ENCODE measurements at regions of chr9 and their contacts with region 1.

Region 1: DNA sequence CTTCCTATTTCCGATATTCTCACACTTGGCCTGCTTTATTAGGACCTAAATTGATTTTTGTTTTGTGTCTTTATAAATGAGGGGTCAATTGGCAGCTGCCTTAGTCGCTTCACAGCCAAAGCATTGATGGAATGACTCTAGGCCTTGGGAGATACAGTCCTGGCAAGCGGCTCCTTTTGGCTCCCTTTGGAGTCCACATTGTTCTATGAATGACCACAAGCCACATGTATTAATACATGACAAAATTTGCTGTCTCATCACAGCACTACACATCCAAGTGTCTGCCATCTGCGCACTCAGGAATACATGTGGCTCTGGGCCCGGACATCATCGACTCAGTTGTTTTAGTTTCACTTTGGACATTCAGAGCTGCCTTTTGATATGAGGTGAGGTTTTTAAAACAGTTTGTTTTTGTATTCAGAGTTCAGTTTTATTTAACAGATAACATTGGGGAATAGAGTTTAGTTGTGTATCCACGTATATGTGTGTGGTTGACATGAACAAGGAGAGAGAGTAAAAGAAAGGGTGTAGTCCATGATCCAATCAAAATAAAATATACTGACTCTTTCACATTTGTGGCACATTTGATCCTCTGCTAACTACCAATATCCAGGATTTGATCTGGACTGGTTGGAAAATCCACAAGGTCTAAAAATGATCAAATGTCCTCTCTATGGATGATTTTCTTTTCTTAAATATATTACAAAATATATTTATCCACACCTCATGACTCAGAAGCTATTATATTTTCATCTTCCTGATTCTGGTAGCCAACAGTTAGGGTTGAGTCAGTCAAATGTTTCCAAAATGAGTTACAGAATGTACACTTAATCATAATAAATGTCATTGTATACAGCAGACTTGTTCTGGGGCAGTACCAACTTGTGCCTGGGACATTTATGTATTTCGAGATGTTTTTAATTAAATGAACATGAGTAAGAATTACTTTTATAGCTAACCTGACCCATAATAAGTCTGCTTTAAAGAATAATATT is 114.0 kb upstream of the MTAP start:
- DNase-seq: no peak
- H3K4me3 Mint-ChIP-seq: no peak overlapping the region
- H3K27ac Mint-ChIP-seq: no peak overlapping the region
- H3K4me1 Mint-ChIP-seq: peaks cover 21% of the 10 kb centered on the region
- H3K27me3 Mint-ChIP-seq: peaks cover 14% of the 10 kb centered on the region

Region 2: DNA sequence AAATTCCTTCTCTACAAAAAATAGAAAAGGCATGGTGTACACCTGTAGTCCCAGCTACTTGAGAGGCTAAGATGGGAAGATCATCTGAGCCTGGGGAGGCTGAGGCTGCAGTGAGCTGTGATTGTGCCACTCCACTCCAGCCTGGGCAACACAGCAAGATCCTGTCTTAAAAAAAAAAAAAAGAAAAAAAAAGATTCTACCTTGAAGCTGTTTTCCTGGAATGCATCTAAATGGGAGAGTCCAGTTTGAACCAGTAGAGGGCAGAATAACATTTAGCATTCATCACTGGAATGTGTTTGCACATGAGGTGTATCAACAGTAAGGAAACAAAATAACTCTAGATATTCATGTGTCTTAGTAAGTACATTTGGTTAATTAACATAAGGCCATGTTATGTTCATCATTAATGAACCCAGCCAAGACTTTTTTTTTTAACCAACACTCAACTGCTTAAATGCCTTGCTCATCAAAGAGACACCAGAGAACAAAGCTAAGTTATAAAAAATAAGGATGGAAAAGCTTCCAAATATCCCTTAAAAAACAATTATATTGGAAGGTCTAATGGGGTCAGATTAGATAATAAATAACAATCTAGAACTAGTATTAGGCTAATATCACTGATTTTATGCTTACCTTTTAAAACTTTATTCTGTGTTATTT is 222.4 kb before region 1 on chr9:
- intact Hi-C with region 1: loop called (anchors 10 kb)
- DNase-seq: no peak
- H3K4me3 Mint-ChIP-seq: no peak overlapping the region
- H3K27ac Mint-ChIP-seq: no peak overlapping the region
- H3K4me1 Mint-ChIP-seq: no peaks in the 10 kb centered on the region
- H3K27me3 Mint-ChIP-seq: peaks cover 18% of the 10 kb centered on the region

Region 3: DNA sequence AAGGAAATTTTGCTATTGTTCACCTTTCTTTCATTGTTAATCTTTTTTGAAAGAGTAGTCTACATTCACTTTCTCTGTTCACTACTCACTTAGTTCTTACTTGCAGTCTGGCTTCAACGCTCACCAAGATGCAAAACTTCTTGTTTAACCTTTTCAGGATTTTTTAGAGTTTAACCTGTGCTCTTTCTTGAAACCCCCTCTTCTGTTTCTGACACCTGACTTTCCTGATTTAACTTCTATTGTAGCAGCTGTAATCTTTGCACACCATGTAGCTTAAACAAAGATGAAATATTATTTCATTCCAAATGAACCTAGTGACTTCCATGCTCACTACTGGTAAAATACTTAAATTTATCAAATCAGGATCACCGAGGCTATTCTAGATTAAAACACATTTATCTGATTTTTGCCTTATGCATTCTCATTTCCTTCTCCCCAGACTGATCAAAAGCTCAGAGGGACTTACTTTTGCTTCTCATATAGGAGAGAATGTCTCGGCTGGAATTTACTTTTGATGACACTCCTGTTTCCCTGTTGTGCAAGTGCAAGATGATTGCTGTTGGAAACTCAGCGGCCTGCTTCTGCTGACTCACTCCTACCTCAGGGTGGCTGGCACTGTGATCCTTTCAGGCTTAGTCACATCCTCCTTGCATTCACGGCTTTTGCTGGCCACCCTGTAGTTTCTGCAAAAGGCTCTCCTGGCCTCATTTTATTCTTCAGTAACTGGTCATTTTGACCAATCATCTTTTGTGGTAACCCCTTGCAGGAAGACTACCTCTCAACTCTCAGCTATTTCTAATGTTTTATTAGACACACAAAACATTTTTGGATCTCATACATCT is 97.0 kb before region 1 on chr9:
- intact Hi-C with region 1: loop called (anchors 5 kb)
- DNase-seq: peak; percentile 24
- H3K4me3 Mint-ChIP-seq: no peak overlapping the region
- H3K27ac Mint-ChIP-seq: peak overlapping the region; percentile 24
- H3K4me1 Mint-ChIP-seq: peaks cover 19% of the 10 kb centered on the region
- H3K27me3 Mint-ChIP-seq: peaks cover 7% of the 10 kb centered on the region

Region 4: GRCh38 chr9:21670374-21670773 is 18.0 kb before region 1 on chr9:
- intact Hi-C with region 1: loop called (anchors 2 kb)
- DNase-seq: no peak
- H3K4me3 Mint-ChIP-seq: no peak overlapping the region
- H3K27ac Mint-ChIP-seq: no peak overlapping the region
- H3K4me1 Mint-ChIP-seq: peaks cover 6% of the 10 kb centered on the region
- H3K27me3 Mint-ChIP-seq: peaks cover 10% of the 10 kb centered on the region

Measured in activated T-helper 2 cell treated with anti-CD3 and anti-CD28 coated beads, Interferon-gamma antibody, Interleukin-2, Interleukin-4, amounts not matched to agents 10 μg/mL and 5 μg/mL and 100 μg/mL, durations not matched to agents 14 hours and 24 hours and 36 hours (primary cell).